Dorsolateral prefrontal cortex (tissue), 120 donors: ENCODE measurements at regions of chr3 and their contacts with region 1.

Region 1: DNA sequence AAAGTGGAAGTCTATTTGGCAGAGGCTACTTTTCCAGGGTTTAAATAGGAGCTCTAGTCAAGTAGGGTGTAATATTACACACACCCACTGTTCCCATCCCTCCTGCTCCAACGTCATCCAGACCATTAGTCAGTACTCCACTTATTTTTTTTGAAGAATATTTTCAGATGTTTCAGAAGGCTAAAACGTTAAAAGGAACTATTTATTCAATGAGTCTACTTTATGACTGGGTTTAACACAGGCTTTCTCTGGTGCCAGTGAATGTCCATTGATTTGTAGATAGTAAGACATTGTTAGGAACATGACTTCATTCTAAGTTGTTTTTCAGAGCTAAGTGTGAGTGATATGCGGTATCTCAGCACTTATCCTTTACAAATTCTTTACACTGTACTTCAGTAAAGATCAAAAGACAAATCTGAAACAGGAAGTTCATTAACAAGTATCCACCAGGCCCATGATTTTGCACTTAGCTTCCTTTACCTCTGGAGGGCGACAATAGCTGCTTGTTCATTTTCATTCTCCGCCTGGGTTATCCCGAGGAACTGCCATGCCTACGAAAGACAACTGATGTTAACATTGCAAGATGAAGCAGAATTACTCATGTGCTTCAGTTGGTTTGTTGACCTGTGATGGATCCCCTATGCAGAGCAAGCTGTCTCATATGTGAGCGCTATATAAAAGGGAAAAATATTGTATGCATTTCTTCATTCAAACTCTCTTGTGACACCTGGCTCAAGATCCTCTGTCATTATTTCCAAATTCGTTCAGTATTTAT is 158.7 kb downstream of the USP13 start:
- DNase-seq: peak in 7 of 10 donors; percentile 9 to 67 (median 44)
- H3K4me3 ChIP-seq: peak overlapping the region in 1 of 59 donors; percentile 13
- H3K27ac ChIP-seq: peak overlapping the region in 51 of 59 donors; percentile 1 to 79 (median 40)
- H3K27me3 ChIP-seq: no peaks in the 10 kb centered on the region
- CTCF ChIP-seq: peak; percentile 26 to 88 (median 69)

Region 2: GRCh38 chr3:179921500-179921899 is 110.0 kb after region 1 on chr3:
- intact Hi-C with region 1: loop called in 1 of 2 experiments (anchors 5 kb)
- DNase-seq: peak in 3 of 10 donors; percentile 40 to 80 (median 53)
- H3K4me3 ChIP-seq: peak overlapping the region in 1 of 59 donors; percentile 27
- H3K27ac ChIP-seq: peak overlapping the region in 44 of 59 donors; percentile 1 to 82 (median 56)
- H3K27me3 ChIP-seq: no peaks in the 10 kb centered on the region
- CTCF ChIP-seq: peak in 1 of 56 donors; percentile 23

Region 3: DNA sequence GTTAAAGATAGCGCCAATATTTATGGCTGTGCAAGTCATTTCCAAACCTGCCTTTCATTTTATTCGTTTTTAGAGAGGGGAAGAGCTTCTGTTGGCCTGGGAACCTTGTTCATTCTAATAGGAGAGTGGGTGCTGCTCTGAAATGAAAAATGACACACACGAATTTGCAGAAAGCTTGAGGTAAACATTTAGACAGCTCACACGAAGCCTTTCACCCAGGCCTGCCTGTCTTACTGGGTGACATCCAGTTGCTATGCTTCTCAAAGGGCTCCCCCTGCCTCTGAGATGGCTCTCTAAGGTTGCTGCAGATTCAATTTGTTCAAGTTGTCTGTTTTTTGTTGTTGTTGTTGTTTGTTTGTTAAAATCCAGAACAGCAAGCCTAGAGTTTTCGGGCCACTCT is 207.0 kb after region 1 on chr3:
- intact Hi-C with region 1: loop called (anchors 1 to 10 kb)
- DNase-seq: peak in 8 of 10 donors; percentile 38 to 78 (median 57)
- H3K4me3 ChIP-seq: peak overlapping the region in 10 of 59 donors; percentile 0 to 31 (median 12)
- H3K27ac ChIP-seq: peak overlapping the region in 56 of 59 donors; percentile 12 to 90 (median 76)
- H3K27me3 ChIP-seq: no peaks in the 10 kb centered on the region
- CTCF ChIP-seq: peak in 55 of 56 donors; percentile 22 to 82 (median 55)

Region 4: DNA sequence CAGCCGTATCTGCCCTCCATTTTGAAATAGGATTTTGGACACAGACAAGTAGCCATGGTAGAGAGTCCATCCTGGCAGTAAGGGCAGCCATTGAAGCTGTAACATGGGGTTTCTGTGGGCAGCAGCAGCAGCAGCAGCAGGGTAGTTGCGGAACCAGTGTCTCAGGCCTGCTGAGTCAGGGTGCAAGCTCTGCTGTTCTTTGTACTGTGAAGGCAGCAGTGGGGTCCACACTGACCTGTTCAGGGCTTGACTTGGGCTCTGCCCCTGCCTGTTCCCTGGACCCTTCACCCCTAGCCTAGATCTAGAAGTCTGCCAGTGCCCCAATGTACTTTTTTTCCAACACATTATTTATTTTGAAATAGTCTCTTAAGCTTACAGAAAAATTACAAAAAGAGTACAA is 215.5 kb after region 1 on chr3:
- intact Hi-C with region 1: loop called in 1 of 2 experiments (anchors 10 kb)
- DNase-seq: no peak
- H3K4me3 ChIP-seq: no peak overlapping the region
- H3K27ac ChIP-seq: peak overlapping the region in 1 of 59 donors; percentile 44
- H3K27me3 ChIP-seq: no peaks in the 10 kb centered on the region
- CTCF ChIP-seq: no peak

Region 5: DNA sequence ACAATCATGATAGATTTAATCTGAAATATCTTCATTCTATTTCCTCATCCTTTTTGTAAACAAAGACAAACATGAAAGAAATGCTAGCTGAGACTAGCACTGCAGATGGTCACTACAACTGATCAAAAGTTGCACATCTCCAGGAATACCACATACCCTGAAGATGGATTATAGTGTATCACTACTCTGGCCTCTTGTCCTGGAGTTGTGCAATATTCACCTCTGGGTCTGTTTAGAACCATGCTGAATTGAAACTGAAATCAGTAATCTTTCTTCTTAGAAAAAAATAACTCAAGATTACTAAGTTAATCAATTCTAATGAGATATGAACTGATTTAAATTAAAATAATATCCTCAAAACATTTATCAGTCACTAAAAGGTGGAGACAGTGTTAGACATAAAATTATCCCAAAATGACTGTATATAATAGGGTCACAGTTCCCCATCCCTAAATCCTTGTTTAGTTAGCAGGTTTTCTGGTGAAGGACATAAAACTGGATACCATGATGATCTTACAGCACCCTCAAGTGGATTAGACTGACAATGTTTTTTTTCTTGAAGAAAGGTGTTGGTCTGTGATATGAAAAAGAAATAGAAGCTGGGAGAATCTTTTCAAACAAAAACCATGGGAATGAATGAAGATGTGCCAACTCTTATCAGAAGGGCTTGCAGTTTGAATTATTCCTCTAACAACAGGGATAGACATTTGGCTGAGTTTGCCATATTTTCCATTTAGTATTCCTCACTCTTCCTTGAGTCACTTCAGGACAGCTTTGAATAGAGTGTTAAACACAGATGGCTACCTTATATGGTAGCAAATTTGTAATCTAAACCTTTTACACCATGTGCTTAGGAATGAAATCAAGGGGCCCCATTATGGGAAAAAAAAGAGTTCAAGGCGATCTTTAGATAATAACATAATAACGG is 783.4 kb after region 1 on chr3:
- intact Hi-C with region 1: loop called in 1 of 2 experiments (anchors 2 kb)
- DNase-seq: no peak
- H3K4me3 ChIP-seq: no peak overlapping the region
- H3K27ac ChIP-seq: no peak overlapping the region
- H3K27me3 ChIP-seq: no peaks in the 10 kb centered on the region
- CTCF ChIP-seq: peak in 55 of 56 donors; percentile 42 to 81 (median 64)